MCF 10A (cell line): ENCODE measurements at regions of chr22 and their contacts with region 1.

Region 1: GRCh38 chr22:39319270-39320022 is at the start of gene RPL3:
- DNase-seq: peak; percentile 98
- H3K4me3 Mint-ChIP-seq: peak within 1 kb of the TSS; percentile 99
- H3K27ac Mint-ChIP-seq: peak within 1 kb of the TSS; percentile 100
- H3K4me1 Mint-ChIP-seq: peaks cover 17% of the 10 kb centered on the region
- H3K27me3 Mint-ChIP-seq: no peaks in the 10 kb centered on the region
- CTCF ChIP-seq: no peak
- total RNA-seq, gene RPL3: 3,475 and 3,632 TPM in 2 replicates

Region 2: GRCh38 chr22:38872172-38872830 is 447.1 kb before region 1 on chr22 and contains the start of gene CBX6:
- CTCF ChIA-PET with region 1: interaction called, 13 read pairs
- POLR2A ChIA-PET with region 1: interaction called, 16 read pairs
- intact Hi-C with region 1: loop called (anchors 5 kb)
- DNase-seq: peak; percentile 78
- H3K4me3 Mint-ChIP-seq: peak within 1 kb of the TSS; percentile 82
- H3K27ac Mint-ChIP-seq: peak within 1 kb of the TSS; percentile 35
- H3K4me1 Mint-ChIP-seq: peaks cover 21% of the 10 kb centered on the region
- H3K27me3 Mint-ChIP-seq: peaks cover 52% of the 10 kb centered on the region
- CTCF ChIP-seq: no peak
- total RNA-seq, gene CBX6: 22.9 and 42.1 TPM in 2 replicates

Region 3: DNA sequence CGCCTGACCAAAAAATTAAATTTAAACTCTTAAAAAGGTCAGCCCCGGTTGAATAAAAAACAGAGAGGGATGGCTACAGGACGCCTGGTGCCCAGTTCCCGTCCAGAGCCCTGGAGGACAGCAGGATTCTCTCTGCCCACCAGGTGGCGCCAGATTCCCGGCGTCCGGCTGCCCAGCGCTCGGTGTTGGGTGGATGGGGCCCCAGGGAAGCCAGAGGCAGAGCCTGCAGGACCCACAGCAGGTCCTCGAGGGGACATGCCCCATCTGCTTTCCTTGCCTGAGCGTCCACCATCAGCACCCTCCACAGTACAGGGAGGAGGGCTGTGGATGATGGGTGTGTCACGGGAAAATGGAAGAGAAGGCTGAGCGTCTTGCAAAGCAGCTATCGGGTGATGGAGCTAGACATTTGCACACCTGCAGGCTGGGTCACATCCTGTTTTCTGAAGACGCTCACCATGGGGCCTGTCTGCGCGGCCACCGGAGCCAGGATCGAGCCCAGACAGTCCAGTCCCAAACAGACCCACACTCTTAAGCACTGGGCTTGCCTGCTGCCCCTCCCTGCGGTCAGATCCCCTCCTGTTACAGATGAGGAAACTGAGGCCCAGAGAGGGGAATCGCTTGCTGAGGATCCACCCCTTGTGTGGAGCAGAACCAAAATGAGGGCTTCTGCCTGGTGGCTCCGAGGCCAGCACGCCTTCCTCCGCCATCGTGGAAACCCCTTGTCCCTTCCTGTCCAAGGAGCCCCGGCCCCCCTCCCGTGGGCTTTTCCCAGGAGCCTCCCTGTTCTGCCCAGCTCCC is 148.4 kb before region 1 on chr22:
- CTCF ChIA-PET with region 1: interaction called, 256 read pairs
- POLR2A ChIA-PET with region 1: interaction called, 68 read pairs
- intact Hi-C with region 1: no loop called
- DNase-seq: peak; percentile 76
- H3K4me3 Mint-ChIP-seq: no peak overlapping the region
- H3K27ac Mint-ChIP-seq: no peak overlapping the region
- H3K4me1 Mint-ChIP-seq: peaks cover 36% of the 10 kb centered on the region
- H3K27me3 Mint-ChIP-seq: no peaks in the 10 kb centered on the region
- CTCF ChIP-seq: peak; percentile 96

Region 4: DNA sequence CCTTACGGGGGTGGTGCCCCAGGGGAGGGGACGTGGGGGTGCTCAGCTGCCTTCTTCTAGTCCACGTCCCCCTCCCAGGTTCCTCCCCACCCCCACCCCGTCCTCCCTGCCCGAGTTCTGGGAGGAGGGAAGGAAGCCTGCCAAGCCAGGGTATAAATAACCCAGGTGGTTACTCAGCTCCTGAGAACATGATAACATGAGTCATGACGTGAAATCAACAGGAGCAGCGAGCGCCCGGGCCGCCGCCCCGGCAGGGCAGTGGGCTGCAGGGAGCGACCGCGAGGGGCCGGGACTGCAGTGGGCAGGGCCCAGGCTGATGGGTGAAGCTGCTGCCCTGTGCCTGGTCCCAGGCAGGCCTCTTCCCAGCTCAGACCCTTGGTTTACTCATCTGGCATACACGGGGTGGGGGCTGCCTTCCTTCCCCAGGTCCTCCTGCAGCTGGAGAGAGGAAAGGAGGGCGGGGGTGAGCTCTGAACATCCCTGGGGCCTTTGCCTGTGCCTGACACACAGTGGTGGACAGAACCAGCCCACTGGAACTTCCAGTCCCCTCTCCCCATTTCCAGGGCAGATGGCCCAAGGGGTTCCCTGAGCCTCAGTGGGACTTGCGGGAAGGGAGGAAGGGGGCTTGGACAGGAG is 65.9 kb before region 1 on chr22:
- CTCF ChIA-PET with region 1: interaction called, 3 read pairs
- POLR2A ChIA-PET with region 1: interaction called, 14 read pairs
- intact Hi-C with region 1: no loop called
- DNase-seq: peak; percentile 91
- H3K4me3 Mint-ChIP-seq: no peak overlapping the region
- H3K27ac Mint-ChIP-seq: no peak overlapping the region
- H3K4me1 Mint-ChIP-seq: peaks cover 21% of the 10 kb centered on the region
- H3K27me3 Mint-ChIP-seq: no peaks in the 10 kb centered on the region
- CTCF ChIP-seq: no peak

Region 5: DNA sequence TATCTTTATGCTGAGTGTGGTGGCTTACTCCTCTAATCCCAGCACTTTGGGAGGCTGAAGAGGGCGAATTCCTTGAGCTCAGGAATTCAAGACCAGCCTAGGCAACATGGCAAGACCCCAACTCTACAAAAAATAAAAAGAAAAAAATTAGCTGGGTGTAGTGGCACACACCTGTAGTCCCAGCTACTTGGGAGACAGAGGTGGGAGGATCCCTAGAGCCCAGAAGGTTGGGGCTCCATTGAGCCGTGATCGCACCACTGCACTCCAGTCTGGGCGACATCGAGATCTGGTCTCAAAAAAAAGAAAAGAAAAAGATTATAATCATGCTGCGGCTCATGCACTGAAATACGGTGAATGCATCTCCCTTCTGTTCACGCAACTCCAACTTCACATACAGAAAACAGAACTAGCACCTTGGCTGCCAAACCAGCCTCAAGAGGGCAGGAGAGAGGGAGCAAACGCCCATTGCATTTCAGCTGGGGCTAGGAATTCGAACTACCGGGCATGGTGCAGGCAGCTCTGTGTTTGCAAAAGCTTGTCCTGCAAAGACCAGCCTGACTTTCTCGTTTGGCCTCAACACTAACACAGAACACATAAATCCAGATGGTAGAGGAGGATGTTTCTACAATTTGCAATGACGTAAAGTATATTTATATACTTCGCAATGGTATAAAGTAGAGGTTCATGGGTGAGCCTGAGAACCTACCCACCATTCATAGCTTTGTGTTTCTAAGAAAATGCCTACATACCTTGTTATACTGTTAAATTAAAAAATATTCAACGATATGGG is 24.0 kb after region 1 on chr22:
- CTCF ChIA-PET with region 1: interaction called, 7 read pairs
- POLR2A ChIA-PET with region 1: interaction called, 19 read pairs
- intact Hi-C with region 1: no loop called
- DNase-seq: peak; percentile 68
- H3K4me3 Mint-ChIP-seq: no peak overlapping the region
- H3K27ac Mint-ChIP-seq: no peak overlapping the region
- H3K4me1 Mint-ChIP-seq: peaks cover 4% of the 10 kb centered on the region
- H3K27me3 Mint-ChIP-seq: peaks cover 26% of the 10 kb centered on the region
- CTCF ChIP-seq: peak; percentile 64

Region 6: DNA sequence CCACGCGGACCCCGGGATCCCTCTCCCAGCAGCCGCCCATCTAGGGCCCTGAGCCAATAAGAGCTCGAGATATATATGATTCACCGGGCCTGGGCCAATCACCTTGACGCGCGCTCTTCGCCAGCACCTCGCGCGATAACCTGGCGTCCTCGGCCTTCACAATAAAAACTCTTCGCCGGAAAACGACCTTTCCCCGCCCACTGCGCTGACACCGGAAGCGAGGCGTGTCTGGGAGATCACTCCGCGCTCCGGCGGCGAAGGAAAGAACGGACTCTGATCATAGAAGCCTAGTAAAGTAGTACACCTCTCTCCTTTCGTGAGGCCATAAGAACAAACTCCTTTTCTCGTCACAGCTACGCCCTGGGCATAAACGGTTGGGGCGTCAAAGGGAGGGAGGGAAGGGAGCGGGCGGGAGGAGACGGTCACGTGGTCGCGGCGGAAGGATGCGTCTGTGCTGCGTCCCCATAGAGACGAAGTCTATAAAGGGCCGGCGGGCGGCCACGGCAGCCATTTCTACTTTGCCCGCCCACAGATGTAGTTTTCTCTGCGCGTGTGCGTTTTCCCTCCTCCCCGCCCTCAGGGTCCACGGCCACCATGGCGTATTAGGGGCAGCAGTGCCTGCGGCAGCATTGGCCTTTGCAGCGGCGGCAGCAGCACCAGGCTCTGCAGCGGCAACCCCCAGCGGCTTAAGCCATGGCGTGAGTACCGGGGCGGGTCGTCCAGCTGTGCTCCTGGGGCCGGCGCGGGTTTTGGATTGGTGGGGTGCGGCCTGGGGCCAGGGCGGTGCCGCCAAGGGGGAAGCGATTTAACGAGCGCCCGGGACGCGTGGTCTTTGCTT is 200.8 kb after region 1 on chr22 and contains the start of gene ATF4:
- CTCF ChIA-PET with region 1: interaction called, 9 read pairs
- POLR2A ChIA-PET with region 1: interaction called, 102 read pairs
- intact Hi-C with region 1: loop called (anchors 5 kb)
- DNase-seq: peak; percentile 98
- H3K4me3 Mint-ChIP-seq: peak within 1 kb of the TSS; percentile 93
- H3K27ac Mint-ChIP-seq: peak within 1 kb of the TSS; percentile 100
- H3K4me1 Mint-ChIP-seq: peaks cover 23% of the 10 kb centered on the region
- H3K27me3 Mint-ChIP-seq: no peaks in the 10 kb centered on the region
- CTCF ChIP-seq: no peak
- total RNA-seq, gene ATF4: 717 and 764 TPM in 2 replicates